CD8-positive, alpha-beta T cell (primary cell): ENCODE measurements at regions of chr10 and their contacts with region 1.

Region 1: GRCh38 chr10:46228563-46229071 is 58.2 kb upstream of the ANTXRL start:
- DNase-seq: peak in 8 of 9 experiments; percentile 38 to 76 (median 62)
- ATAC-seq: peak; percentile 88
- H3K4me3 ChIP-seq: no peak overlapping the region
- H3K4me3 Mint-ChIP-seq: no peak overlapping the region
- H3K27ac ChIP-seq: no peak overlapping the region
- H3K27ac Mint-ChIP-seq: peak overlapping the region; percentile 32
- H3K4me1 ChIP-seq: no peaks in the 10 kb centered on the region
- H3K4me1 Mint-ChIP-seq: peaks cover 14% of the 10 kb centered on the region
- H3K27me3 ChIP-seq: no peaks in the 10 kb centered on the region
- H3K27me3 Mint-ChIP-seq: no peaks in the 10 kb centered on the region
- CTCF ChIP-seq: peak; percentile 43

Region 2: DNA sequence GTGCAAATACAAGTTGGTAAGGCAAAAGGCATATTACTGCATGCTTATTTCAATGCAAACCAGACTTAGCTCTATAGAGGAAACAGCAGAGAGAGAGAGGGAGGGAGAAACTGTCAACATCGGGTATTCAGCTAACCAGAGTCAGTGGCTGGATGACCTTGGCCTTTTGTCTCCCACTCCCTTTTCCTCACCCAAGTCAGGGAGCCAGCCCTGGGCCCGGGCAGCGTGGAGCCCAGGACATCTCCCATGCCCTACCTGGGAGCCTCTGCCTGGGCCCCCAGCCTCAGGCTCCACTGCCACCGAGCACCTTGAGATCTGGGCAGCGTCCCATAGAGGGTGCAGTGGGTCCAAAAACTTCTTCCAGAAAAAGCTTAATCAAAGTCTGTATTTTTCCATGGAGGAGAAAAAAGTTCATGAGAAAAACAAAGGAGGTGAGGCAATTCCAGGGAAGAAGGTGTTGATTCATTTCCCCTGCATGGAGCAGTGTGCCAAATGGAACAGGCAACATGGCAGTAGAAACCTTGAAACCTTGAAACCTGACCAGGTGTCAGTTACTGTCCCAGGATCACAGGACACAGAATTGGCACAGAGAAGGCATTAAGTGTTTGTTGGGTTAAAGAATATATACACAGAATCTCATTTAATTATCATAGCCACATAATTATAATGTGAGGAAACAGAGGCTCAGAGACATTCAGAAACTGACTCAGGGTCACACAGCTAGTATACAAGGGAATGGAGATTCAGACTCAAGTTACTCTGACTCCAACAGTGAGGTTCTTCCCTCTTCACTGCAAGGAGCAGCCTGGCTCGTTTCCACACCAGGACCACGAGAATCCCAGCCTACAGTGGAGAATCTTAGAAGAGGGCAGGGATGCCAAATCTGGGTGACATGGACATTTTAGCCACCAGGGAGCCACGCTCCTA is 192.4 kb before region 1 on chr10:
- CTCF ChIA-PET with region 1: no interaction called
- POLR2A ChIA-PET with region 1: no interaction called
- intact Hi-C with region 1: no loop called
- DNase-seq: no peak
- ATAC-seq: no peak
- H3K4me3 ChIP-seq: no peak overlapping the region
- H3K4me3 Mint-ChIP-seq: no peak overlapping the region
- H3K27ac ChIP-seq: no peak overlapping the region
- H3K27ac Mint-ChIP-seq: no peak overlapping the region
- H3K4me1 ChIP-seq: no peaks in the 10 kb centered on the region
- H3K4me1 Mint-ChIP-seq: peaks cover 4% of the 10 kb centered on the region
- H3K27me3 ChIP-seq: no peaks in the 10 kb centered on the region
- H3K27me3 Mint-ChIP-seq: no peaks in the 10 kb centered on the region
- CTCF ChIP-seq: no peak

Region 3: GRCh38 chr10:46325023-46325422 is 96.4 kb after region 1 on chr10:
- CTCF ChIA-PET with region 1: interaction called, 11 read pairs
- POLR2A ChIA-PET with region 1: no interaction called
- intact Hi-C with region 1: loop called (anchors 1 kb)
- DNase-seq: peak in 2 of 9 experiments; percentile 18 to 29
- ATAC-seq: no peak
- H3K4me3 ChIP-seq: no peak overlapping the region
- H3K4me3 Mint-ChIP-seq: no peak overlapping the region
- H3K27ac ChIP-seq: no peak overlapping the region
- H3K27ac Mint-ChIP-seq: no peak overlapping the region
- H3K4me1 ChIP-seq: no peaks in the 10 kb centered on the region
- H3K4me1 Mint-ChIP-seq: no peaks in the 10 kb centered on the region
- H3K27me3 ChIP-seq: no peaks in the 10 kb centered on the region
- H3K27me3 Mint-ChIP-seq: peaks cover 5% of the 10 kb centered on the region
- CTCF ChIP-seq: no peak

Region 4: DNA sequence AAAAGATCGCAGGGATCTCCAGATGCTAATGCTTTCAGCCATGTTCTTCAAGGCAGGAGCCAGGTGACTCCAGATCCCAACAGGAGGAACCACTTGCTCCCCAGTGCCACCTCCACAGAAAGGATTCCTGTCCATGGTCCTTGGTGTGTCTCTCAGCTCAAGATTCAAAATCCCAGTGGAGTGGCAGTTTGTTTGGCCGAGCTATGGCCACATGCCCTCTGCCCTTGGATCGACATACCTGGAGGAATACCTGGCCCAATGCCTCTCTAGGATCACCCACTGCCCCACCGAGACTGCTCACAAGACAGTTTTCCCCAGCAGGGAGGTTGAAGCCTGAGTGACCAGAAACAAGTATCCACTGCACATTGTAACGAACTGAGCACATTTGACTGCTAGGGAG is 331.8 kb after region 1 on chr10:
- CTCF ChIA-PET with region 1: no interaction called
- POLR2A ChIA-PET with region 1: no interaction called
- intact Hi-C with region 1: loop called in 1 of 2 experiments (anchors 10 kb)
- DNase-seq: peak in 5 of 9 experiments; percentile 0 to 47 (median 4)
- ATAC-seq: no peak
- H3K4me3 ChIP-seq: no peak overlapping the region
- H3K4me3 Mint-ChIP-seq: no peak overlapping the region
- H3K27ac ChIP-seq: no peak overlapping the region
- H3K27ac Mint-ChIP-seq: no peak overlapping the region
- H3K4me1 ChIP-seq: no peaks in the 10 kb centered on the region
- H3K4me1 Mint-ChIP-seq: peaks cover 10% of the 10 kb centered on the region
- H3K27me3 ChIP-seq: peaks cover 13 to 18% of the 10 kb centered on the region in 2 experiments
- H3K27me3 Mint-ChIP-seq: peaks cover 13% of the 10 kb centered on the region
- CTCF ChIP-seq: no peak